ENCODE measurements at regions of chr17 and their contacts with region 1.

Region 1: GRCh38 chr17:47286198-47286914 is 32.7 kb downstream of the ITGB3 start:
- DNase-seq: peak; percentile 98
- ATAC-seq: peak; percentile 85
- H3K4me3 ChIP-seq: no peak overlapping the region
- H3K27ac ChIP-seq: peak overlapping the region; percentile 97
- H3K4me1 ChIP-seq: peaks cover 30% of the 10 kb centered on the region
- H3K27me3 ChIP-seq: no peaks in the 10 kb centered on the region
- CTCF ChIP-seq: no peak
- EP300 ChIP-seq: peak; percentile 65 to 70; a peak in 2 of 4 replicates
- POLR2A ChIP-seq: peak; percentile 54
- RAD21 ChIP-seq: peak; percentile 30; the same call in 1 of the 2 replicates

Region 2: GRCh38 chr17:46727572-46728348 is 558.6 kb before region 1 on chr17:
- CTCF ChIA-PET with region 1: no interaction called
- POLR2A ChIA-PET with region 1: no interaction called
- RAD21 ChIA-PET with region 1: no interaction called
- SMC1A ChIA-PET with region 1: no interaction called
- in situ Hi-C with region 1: no loop called
- intact Hi-C with region 1: no loop called
- DNase-seq: no peak
- ATAC-seq: no peak
- H3K4me3 ChIP-seq: no peak overlapping the region
- H3K27ac ChIP-seq: no peak overlapping the region
- H3K4me1 ChIP-seq: 0 out of 2 replicates have a peak, but pooled peaks cover 3% of the 10 kb centered on the region
- H3K27me3 ChIP-seq: no peaks in the 10 kb centered on the region
- CTCF ChIP-seq: no peak
- EP300 ChIP-seq: no peak
- POLR2A ChIP-seq: no peak
- RAD21 ChIP-seq: no peak

Region 3: GRCh38 chr17:47220531-47220999 is 65.8 kb before region 1 on chr17:
- CTCF ChIA-PET with region 1: no interaction called
- POLR2A ChIA-PET with region 1: no interaction called
- RAD21 ChIA-PET with region 1: no interaction called
- SMC1A ChIA-PET with region 1: interaction called, 13 read pairs
- in situ Hi-C with region 1: no loop called
- intact Hi-C with region 1: no loop called
- DNase-seq: no peak
- ATAC-seq: no peak; the same call in 2 of the 3 replicates
- H3K4me3 ChIP-seq: no peak overlapping the region
- H3K27ac ChIP-seq: no peak overlapping the region
- H3K4me1 ChIP-seq: peaks cover 9% of the 10 kb centered on the region
- H3K27me3 ChIP-seq: no peaks in the 10 kb centered on the region
- CTCF ChIP-seq: no peak
- EP300 ChIP-seq: no peak
- POLR2A ChIP-seq: no peak
- RAD21 ChIP-seq: no peak

Region 4: DNA sequence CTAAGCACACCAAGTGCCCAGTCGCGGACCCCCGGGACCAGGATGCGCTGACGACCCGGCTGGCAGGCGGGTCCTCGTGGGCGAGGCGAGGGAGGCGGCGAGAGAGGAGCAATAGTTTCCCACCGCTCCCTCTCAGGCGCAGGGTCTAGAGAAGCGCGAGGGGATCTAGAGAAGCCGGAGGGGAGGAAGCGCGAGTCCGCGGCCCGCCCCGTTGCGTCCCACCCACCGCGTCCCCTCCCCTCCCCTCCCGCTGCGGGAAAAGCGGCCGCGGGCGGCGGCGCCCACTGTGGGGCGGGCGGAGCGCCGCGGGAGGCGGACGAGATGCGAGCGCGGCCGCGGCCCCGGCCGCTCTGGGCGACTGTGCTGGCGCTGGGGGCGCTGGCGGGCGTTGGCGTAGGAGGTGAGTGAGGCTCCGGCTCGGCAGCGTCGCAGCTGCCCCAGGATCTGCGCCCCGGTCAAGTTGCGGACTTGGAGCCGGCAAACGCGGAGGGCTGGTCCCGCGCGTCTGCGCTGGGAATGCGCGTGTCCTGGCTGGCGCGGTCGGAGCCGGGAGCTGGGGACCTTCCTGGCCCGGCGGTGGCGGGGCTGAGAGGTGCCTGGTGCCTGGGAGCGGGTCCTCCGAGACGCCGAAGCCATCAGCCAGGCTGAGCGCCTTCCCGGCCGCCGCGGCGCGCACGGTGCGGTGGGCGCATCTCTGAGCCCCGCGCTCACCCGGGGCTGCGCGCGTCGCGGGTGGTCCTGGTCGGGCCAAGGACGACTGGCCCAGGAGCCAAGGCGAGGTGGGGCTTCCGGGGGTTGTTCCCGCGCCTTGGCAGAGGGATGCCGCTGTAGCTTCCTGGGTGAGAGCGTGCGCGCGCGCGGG is 32.6 kb before region 1 on chr17 and contains the start of gene ITGB3:
- CTCF ChIA-PET with region 1: interaction called, 28 read pairs
- POLR2A ChIA-PET with region 1: interaction called, 42 read pairs
- RAD21 ChIA-PET with region 1: interaction called, 38 read pairs
- SMC1A ChIA-PET with region 1: interaction called, 81 read pairs
- in situ Hi-C with region 1: no loop called
- intact Hi-C with region 1: no loop called
- DNase-seq: no peak
- ATAC-seq: peak; percentile 93
- H3K4me3 ChIP-seq: peak within 1 kb of the TSS; percentile 81
- H3K27ac ChIP-seq: no peak within 1 kb of the TSS
- H3K4me1 ChIP-seq: no peaks in the 10 kb centered on the region; the same call in 1 of the 2 replicates
- H3K27me3 ChIP-seq: no peaks in the 10 kb centered on the region
- CTCF ChIP-seq: peak; percentile 56 to 64 (median 56); a peak in 5 of 6 replicates
- EP300 ChIP-seq: no peak
- POLR2A ChIP-seq: peak; percentile 34; the same call in 1 of the 2 replicates
- RAD21 ChIP-seq: peak; percentile 50
- polyA plus RNA-seq, gene ITGB3: 0.69 to 1.4 TPM

Region 5: DNA sequence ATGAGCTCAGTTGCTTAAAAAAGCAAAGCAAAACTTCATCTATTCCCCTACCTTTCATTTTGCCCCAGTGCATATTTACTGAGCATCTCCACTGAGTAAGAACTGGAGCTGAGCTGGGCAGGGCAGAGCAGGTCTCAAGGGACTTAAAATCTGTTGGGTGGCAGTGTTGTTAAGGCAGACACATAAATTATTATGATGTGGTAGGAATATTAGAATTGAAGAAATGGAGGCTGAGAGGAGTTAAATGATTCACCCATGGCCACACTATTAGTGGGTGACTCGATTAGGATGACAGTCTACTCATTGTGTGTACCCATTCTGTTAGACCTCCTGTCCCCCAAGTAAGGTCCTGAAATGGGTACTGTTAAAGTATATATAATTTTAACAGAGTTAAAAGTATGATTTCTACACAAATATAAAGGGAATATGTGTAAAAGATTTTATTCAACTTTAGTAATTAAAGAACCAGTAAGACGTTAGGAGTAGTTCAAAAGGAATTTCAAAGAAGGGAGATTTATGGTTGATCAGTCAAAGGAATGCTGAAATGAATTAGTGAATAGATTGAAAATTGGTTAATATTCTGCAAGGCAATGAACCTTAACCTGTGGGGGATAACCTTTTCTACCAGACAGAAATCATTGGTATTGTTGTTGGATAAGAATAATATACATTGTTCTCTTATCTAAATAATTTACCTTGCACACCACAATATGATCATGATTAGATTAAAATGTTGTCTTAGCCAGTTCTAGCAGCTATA is 15.2 kb before region 1 on chr17:
- CTCF ChIA-PET with region 1: interaction called, 4 read pairs
- POLR2A ChIA-PET with region 1: interaction called, 15 read pairs
- RAD21 ChIA-PET with region 1: interaction called, 43 read pairs
- SMC1A ChIA-PET with region 1: interaction called, 14 read pairs
- in situ Hi-C with region 1: no loop called
- intact Hi-C with region 1: no loop called
- DNase-seq: no peak
- ATAC-seq: peak; percentile 84
- H3K4me3 ChIP-seq: no peak overlapping the region
- H3K27ac ChIP-seq: no peak overlapping the region
- H3K4me1 ChIP-seq: peaks cover 7% of the 10 kb centered on the region
- H3K27me3 ChIP-seq: no peaks in the 10 kb centered on the region
- CTCF ChIP-seq: no peak
- EP300 ChIP-seq: no peak
- POLR2A ChIP-seq: no peak
- RAD21 ChIP-seq: no peak

Region 6: GRCh38 chr17:47305302-47305923 is 19.1 kb after region 1 on chr17:
- CTCF ChIA-PET with region 1: interaction called, 8 read pairs
- POLR2A ChIA-PET with region 1: interaction called, 16 read pairs
- RAD21 ChIA-PET with region 1: interaction called, 5 read pairs
- SMC1A ChIA-PET with region 1: interaction called, 93 read pairs
- in situ Hi-C with region 1: no loop called
- intact Hi-C with region 1: no loop called
- DNase-seq: no peak
- ATAC-seq: peak; percentile 63
- H3K4me3 ChIP-seq: no peak overlapping the region
- H3K27ac ChIP-seq: no peak overlapping the region
- H3K4me1 ChIP-seq: no peaks in the 10 kb centered on the region
- H3K27me3 ChIP-seq: no peaks in the 10 kb centered on the region
- CTCF ChIP-seq: no peak
- EP300 ChIP-seq: no peak
- POLR2A ChIP-seq: no peak
- RAD21 ChIP-seq: no peak